ENCODE measurements at regions of chr10 and their contacts with region 1.

Region 1: DNA sequence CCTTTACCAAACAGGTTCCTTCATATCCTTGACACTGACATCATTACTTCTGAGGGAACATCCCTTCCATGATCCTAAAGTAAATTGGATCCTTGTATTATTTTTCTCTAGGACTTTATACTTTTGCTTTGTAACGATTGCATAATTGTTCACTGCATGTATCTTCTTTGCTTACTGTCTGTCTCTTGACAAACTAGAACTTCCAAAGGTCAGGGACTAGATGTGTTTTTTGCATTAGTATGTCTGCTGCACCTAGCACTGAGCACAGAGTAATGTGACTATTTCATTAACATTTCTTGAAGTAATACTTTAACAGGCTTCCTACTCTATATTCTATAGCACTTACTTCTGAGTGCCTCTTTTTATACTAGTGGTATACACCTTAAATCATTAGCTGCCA is 976.6 kb upstream of the SORCS1 start:
- DNase-seq: no peak
- H3K4me3 Mint-ChIP-seq: no peak overlapping the region
- H3K27ac Mint-ChIP-seq: no peak overlapping the region
- H3K4me1 Mint-ChIP-seq: no peaks in the 10 kb centered on the region
- H3K27me3 Mint-ChIP-seq: no peaks in the 10 kb centered on the region

Region 2: GRCh38 chr10:107614939-107615665 is 526.0 kb before region 1 on chr10:
- CTCF ChIA-PET with region 1: no interaction called
- POLR2A ChIA-PET with region 1: no interaction called
- intact Hi-C with region 1: no loop called
- DNase-seq: no peak
- H3K4me3 Mint-ChIP-seq: no peak overlapping the region
- H3K27ac Mint-ChIP-seq: no peak overlapping the region
- H3K4me1 Mint-ChIP-seq: no peaks in the 10 kb centered on the region
- H3K27me3 Mint-ChIP-seq: no peaks in the 10 kb centered on the region

Region 3: DNA sequence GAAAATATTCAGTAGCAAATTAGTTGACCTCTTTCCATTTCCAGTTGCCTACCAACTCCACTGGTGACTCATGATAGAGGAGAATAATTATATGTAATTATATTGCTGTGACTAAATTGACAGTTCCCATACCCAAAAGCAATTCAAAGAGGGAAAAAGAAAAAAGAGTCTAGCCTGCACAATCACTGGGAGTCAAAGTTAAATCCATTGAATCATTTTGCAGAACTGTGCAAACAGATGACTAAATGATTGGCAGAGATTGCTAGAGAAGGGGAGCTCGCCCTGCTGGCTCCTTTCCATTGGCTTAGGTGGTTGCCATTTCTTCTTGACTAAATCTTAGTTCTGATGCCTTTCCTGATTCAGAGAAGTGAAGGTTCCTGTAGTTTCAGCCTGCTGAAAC is 252.0 kb after region 1 on chr10:
- CTCF ChIA-PET with region 1: no interaction called
- POLR2A ChIA-PET with region 1: no interaction called
- intact Hi-C with region 1: loop called (anchors 5 kb)
- DNase-seq: no peak
- H3K4me3 Mint-ChIP-seq: no peak overlapping the region
- H3K27ac Mint-ChIP-seq: no peak overlapping the region
- H3K4me1 Mint-ChIP-seq: no peaks in the 10 kb centered on the region
- H3K27me3 Mint-ChIP-seq: no peaks in the 10 kb centered on the region

Measured in activated CD4-positive, alpha-beta memory T cell treated with anti-CD3 and anti-CD28 coated beads for 36 hours (primary cell).